ENCODE measurements at regions of chr6 and their contacts with region 1.

Region 1: DNA sequence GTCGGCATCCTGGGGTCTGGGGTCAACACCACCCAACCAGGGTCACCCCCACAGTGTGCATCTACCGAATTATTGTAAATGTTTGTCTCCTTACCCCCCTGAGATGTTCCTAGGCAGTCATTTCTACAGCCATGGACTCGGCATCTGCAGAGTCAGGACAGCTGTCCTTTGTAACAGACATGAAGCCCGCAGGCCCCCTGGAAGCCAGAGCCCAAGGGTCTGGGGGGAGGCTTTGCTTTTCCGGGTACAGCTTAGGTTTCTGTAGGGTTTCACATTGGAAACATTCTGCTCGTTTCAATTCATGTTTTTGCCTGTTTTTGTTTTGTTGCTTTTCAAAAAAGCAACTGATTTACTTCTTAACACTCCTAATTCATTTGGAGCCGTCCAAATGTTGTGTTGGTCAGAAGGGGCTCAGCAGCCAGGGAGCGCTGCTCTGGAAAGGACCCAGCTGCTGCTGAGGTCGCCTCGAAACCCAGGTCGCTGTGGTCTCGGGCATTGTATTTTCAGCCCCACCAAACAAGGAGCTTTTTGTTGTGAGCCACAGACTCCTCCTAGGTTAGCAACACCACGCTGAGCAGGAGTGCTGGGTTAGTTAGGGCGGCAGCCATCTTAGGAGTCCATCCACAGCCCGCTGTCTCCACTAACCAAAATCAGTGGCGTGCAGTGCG is 160.4 kb downstream of the TMEM242 start:
- DNase-seq: no peak
- H3K4me3 Mint-ChIP-seq: no peak overlapping the region
- H3K27ac Mint-ChIP-seq: no peak overlapping the region
- H3K4me1 Mint-ChIP-seq: peaks cover 4% of the 10 kb centered on the region
- H3K27me3 Mint-ChIP-seq: no peaks in the 10 kb centered on the region

Region 2: GRCh38 chr6:157110607-157111006 is 52.3 kb before region 1 on chr6:
- intact Hi-C with region 1: no loop called
- DNase-seq: no peak
- H3K4me3 Mint-ChIP-seq: no peak overlapping the region
- H3K27ac Mint-ChIP-seq: no peak overlapping the region
- H3K4me1 Mint-ChIP-seq: peaks cover 23% of the 10 kb centered on the region
- H3K27me3 Mint-ChIP-seq: no peaks in the 10 kb centered on the region

Region 3: DNA sequence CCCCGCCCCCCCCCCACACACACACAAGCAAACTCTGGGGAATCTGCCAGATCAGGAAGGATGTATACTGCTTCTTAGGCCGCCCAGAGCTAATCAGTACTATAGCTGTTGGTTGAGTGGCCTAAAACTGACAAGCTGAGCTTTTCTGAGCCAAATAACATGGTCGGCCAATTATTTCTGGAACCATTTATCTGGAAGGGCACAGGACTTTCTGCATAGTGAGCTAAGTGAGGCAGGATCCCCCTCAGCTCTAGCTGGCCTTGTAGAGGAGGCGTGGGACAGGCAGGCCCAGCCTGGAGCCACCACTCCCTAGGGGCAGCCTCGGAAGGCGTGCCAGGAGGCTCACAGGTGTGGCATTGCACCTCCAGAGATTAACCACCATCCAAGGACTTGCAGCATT is 39.7 kb before region 1 on chr6:
- intact Hi-C with region 1: loop called (anchors 5 kb)
- DNase-seq: no peak
- H3K4me3 Mint-ChIP-seq: no peak overlapping the region
- H3K27ac Mint-ChIP-seq: no peak overlapping the region
- H3K4me1 Mint-ChIP-seq: peaks cover 1% of the 10 kb centered on the region
- H3K27me3 Mint-ChIP-seq: no peaks in the 10 kb centered on the region

Region 4: DNA sequence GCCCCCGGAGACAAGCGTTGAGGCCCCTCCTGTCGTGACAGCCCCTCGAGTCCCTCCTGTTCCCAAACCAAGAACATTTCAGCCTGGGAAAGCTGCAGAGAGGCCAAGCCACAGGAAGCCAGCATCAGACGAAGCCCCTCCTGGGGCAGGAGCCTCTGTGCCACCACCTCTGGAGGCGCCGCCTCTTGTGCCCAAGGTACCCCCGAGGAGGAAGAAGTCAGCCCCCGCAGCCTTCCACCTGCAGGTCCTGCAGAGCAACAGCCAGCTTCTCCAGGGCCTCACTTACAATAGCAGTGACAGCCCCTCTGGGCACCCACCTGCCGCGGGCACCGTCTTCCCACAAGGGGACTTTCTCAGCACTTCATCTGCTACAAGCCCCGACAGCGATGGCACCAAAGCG is 932.8 kb after region 1 on chr6:
- intact Hi-C with region 1: no loop called
- DNase-seq: no peak
- H3K4me3 Mint-ChIP-seq: no peak overlapping the region
- H3K27ac Mint-ChIP-seq: no peak overlapping the region
- H3K4me1 Mint-ChIP-seq: no peaks in the 10 kb centered on the region
- H3K27me3 Mint-ChIP-seq: no peaks in the 10 kb centered on the region

Measured in activated CD4-positive, alpha-beta T cell treated with anti-CD3 and anti-CD28 coated beads, Interleukin-2, amount 10 ng/mL, durations not matched to agents 24 days and 14 days (primary cell).